ENCODE measurements at regions of chr15 and their contacts with region 1.

Region 1: GRCh38 chr15:91852741-91853510 is 582 bp upstream of the SLCO3A1 start:
- DNase-seq: peak; percentile 31 to 86
- H3K4me3 ChIP-seq: peak overlapping the region; percentile 82 to 88
- H3K27ac ChIP-seq: peak overlapping the region; percentile 95 to 98
- H3K4me1 ChIP-seq: peaks cover 13 to 26% of the 10 kb centered on the region in 2 donors
- H3K27me3 ChIP-seq: no peaks in the 10 kb centered on the region
- CTCF ChIP-seq: peak; percentile 61 to 88 (median 70)

Region 2: GRCh38 chr15:91694831-91695210 is 158.1 kb before region 1 on chr15:
- intact Hi-C with region 1: loop called (anchors 2 kb)
- DNase-seq: peak in 1 of 2 donors; percentile 81
- H3K4me3 ChIP-seq: peak overlapping the region in 1 of 2 donors; percentile 51
- H3K27ac ChIP-seq: peak overlapping the region; percentile 72 to 81
- H3K4me1 ChIP-seq: peaks cover 0 to 3% of the 10 kb centered on the region in 2 donors
- H3K27me3 ChIP-seq: no peaks in the 10 kb centered on the region
- CTCF ChIP-seq: no peak

Region 3: GRCh38 chr15:91782221-91782620 is 70.7 kb before region 1 on chr15:
- intact Hi-C with region 1: no loop called
- DNase-seq: no peak
- H3K4me3 ChIP-seq: no peak overlapping the region
- H3K27ac ChIP-seq: no peak overlapping the region
- H3K4me1 ChIP-seq: no peaks in the 10 kb centered on the region
- H3K27me3 ChIP-seq: no peaks in the 10 kb centered on the region
- CTCF ChIP-seq: no peak

Region 4: DNA sequence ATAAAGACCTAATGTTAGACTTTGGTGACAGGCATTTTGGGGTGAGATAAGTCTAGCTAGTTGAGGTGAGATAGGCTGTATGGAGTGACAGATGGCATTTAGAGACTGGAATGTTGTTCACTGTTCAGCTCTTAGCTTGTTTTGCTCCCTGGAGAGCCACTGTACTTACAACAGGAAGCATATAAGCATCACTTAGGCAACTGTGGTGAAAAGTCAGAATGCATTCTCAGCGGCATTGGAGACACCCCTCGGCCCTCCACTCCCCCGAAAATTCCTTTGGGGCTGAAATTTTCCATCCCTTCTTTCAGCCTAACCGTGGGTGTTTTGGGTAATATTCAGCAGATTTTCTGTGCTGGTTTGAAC is 74.0 kb after region 1 on chr15:
- intact Hi-C with region 1: loop called (anchors 2 kb)
- DNase-seq: no peak
- H3K4me3 ChIP-seq: peak overlapping the region in 1 of 2 donors; percentile 46
- H3K27ac ChIP-seq: peak overlapping the region; percentile 73 to 74
- H3K4me1 ChIP-seq: peaks cover 10 to 35% of the 10 kb centered on the region in 2 donors
- H3K27me3 ChIP-seq: no peaks in the 10 kb centered on the region
- CTCF ChIP-seq: no peak

Region 5: GRCh38 chr15:92034227-92034626 is 181.3 kb after region 1 on chr15:
- intact Hi-C with region 1: no loop called
- DNase-seq: no peak
- H3K4me3 ChIP-seq: no peak overlapping the region
- H3K27ac ChIP-seq: peak overlapping the region; percentile 67 to 71
- H3K4me1 ChIP-seq: peaks cover 3 to 33% of the 10 kb centered on the region in 2 donors
- H3K27me3 ChIP-seq: no peaks in the 10 kb centered on the region
- CTCF ChIP-seq: no peak

Region 6: GRCh38 chr15:92069308-92070250 is 216.7 kb after region 1 on chr15:
- intact Hi-C with region 1: loop called (anchors 1 kb)
- DNase-seq: peak; percentile 28 to 88
- H3K4me3 ChIP-seq: peak overlapping the region; percentile 34 to 55
- H3K27ac ChIP-seq: peak overlapping the region; percentile 70 to 80
- H3K4me1 ChIP-seq: peaks cover 0 to 18% of the 10 kb centered on the region in 2 donors
- H3K27me3 ChIP-seq: no peaks in the 10 kb centered on the region
- CTCF ChIP-seq: no peak

Region 7: DNA sequence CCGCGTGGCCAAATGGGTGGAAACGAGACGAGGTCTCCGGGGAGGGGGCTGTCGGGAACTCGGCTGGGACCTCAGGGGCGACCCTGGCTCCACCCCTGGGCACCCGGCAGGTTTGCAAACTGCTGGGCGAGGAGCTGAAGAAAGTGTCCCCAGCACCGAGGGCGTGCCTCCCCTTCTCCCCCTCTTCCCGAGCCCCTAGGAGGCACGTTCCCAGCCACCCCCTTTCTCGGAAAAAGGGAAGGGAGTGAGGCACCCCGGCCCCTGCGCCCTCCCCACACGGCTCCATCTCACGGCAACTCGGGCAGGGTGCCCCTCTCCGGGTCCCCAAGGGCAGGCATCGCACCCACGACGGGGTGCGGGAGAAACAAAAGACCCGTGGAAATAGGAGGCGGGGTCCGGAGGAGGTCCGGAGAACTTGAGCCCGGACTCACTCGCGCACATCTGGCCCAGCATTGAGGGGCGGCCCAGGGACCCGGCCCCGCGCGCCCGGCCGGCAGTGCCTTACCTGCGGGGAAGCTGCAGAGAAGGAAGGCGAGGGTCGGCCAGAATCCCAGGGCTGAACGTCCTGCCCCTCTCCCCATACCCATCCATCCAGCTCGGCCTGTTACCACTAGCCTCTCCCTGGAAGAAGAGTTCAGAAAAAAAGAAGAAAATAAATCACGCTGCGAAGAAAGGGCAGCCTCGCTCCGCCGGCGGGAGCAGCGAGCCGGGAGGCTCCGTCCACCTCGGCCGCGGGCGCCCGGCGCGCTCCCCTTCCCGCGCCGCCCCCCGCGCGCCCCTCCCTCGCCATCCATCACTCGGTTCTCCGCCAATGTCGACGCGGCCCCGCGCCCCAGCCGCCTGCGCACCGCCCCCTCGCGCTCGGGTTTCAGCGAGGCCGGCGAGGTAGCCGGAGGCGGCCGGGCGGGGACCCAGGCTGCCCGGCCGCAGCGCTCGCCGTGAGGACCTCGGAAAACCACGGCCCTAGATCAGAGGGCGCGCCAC is 1219.8 kb after region 1 on chr15:
- intact Hi-C with region 1: loop called (anchors 10 kb)
- DNase-seq: peak in 1 of 2 donors; percentile 88
- H3K4me3 ChIP-seq: peak overlapping the region; percentile 81 to 91
- H3K27ac ChIP-seq: peak overlapping the region; percentile 84 to 86
- H3K4me1 ChIP-seq: peaks cover 2 to 21% of the 10 kb centered on the region in 2 donors
- H3K27me3 ChIP-seq: no peaks in the 10 kb centered on the region
- CTCF ChIP-seq: peak in 1 of 3 experiments; percentile 4

Measured in ascending aorta (tissue), 2 donors.